Activated CD4-positive, alpha-beta memory T cell treated with anti-CD3 and anti-CD28 coated beads for 36 hours (primary cell): ENCODE measurements at regions of chr10 and their contacts with region 1.

Region 1: GRCh38 chr10:122374237-122374869 is at the start of gene PLEKHA1:
- DNase-seq: peak; percentile 95
- H3K4me3 Mint-ChIP-seq: peak within 1 kb of the TSS; percentile 89
- H3K27ac Mint-ChIP-seq: peak within 1 kb of the TSS; percentile 94
- H3K4me1 Mint-ChIP-seq: peaks cover 36% of the 10 kb centered on the region
- H3K27me3 Mint-ChIP-seq: peaks cover 15% of the 10 kb centered on the region
- total RNA-seq, gene PLEKHA1: 11.1 to 12.9 TPM

Region 2: GRCh38 chr10:121580276-121581116 is 793.9 kb before region 1 on chr10:
- CTCF ChIA-PET with region 1: no interaction called
- POLR2A ChIA-PET with region 1: no interaction called
- intact Hi-C with region 1: no loop called
- DNase-seq: no peak
- H3K4me3 Mint-ChIP-seq: no peak overlapping the region
- H3K27ac Mint-ChIP-seq: no peak overlapping the region
- H3K4me1 Mint-ChIP-seq: no peaks in the 10 kb centered on the region
- H3K27me3 Mint-ChIP-seq: no peaks in the 10 kb centered on the region

Region 3: DNA sequence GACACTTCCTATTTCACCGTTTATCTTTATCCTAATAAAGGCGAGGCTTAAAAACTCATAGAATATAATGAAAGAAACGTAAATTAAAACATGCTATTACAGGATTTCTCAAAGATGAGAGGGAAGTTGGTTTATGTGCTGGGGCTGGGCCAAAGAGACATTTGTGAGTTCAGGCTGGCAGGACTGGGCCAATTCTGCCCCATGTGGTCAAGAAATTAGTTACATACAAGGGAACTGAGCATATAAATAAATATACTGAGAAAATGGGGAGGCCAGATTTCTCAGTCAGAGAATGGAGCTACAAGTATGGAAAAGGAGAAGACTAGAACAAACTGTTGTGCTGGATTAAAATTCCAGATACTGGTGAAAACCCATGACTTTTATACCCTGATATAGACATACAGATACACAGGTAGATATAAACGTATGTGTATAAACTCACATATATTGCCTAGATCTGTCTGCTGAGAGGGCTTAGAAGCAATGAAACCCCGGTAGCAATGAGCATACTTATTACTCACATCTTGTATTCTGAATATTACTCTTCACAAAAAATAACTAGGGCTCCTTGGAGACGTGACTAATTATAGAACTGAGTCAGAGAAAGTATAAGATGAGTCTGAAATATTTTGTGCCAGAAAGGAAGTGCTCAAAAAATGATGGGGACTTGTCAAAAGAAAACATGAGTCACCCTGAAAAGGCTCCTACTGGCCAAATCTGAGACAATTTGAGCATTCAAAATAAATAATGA is 620.5 kb before region 1 on chr10:
- CTCF ChIA-PET with region 1: no interaction called
- POLR2A ChIA-PET with region 1: no interaction called
- intact Hi-C with region 1: loop called (anchors 10 kb)
- DNase-seq: no peak
- H3K4me3 Mint-ChIP-seq: no peak overlapping the region
- H3K27ac Mint-ChIP-seq: peak overlapping the region; percentile 68
- H3K4me1 Mint-ChIP-seq: peaks cover 23% of the 10 kb centered on the region
- H3K27me3 Mint-ChIP-seq: no peaks in the 10 kb centered on the region

Region 4: GRCh38 chr10:122142641-122143237 is 231.6 kb before region 1 on chr10:
- CTCF ChIA-PET with region 1: no interaction called
- POLR2A ChIA-PET with region 1: no interaction called
- intact Hi-C with region 1: no loop called
- DNase-seq: peak; percentile 35
- H3K4me3 Mint-ChIP-seq: no peak overlapping the region
- H3K27ac Mint-ChIP-seq: no peak overlapping the region
- H3K4me1 Mint-ChIP-seq: no peaks in the 10 kb centered on the region
- H3K27me3 Mint-ChIP-seq: peaks cover 2% of the 10 kb centered on the region

Region 5: DNA sequence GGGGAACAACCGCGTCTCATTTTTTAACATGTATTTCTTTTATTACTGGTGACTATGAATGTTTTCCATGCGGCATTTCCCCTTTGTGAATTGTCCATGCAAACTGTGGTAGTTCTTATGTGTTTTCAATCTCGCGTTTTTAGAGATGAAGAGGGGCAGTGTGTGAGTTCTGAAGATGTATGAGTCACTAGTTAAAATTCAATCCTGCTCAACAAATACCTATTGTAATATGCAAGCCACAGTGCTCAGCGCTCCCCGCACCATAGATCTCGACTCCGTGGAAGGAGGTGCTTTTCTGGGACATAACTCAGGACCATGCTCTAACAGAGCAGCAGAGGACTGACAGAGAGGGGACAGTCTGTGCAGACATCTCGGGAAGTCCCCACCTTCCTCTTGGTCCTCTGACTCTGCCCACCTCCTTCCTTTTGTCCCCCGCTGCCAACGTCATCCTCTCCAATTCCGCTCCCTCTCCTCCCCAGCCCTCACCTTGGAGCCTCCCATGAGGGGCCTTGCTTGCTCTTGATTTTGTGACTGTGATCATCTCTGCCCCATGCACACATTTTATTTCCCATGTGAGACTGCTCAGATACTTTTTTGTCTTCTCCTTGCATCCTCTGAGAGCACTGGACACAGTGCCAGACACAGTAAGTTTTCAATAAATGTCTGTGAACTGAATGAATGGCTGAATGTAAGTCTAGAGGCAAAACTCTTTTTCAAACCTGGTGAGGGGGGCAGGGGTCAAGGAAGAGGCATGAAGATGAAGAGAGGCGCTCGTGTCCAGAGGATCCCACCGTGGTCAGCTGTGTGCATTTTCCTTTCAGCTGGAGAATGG is 42.5 kb before region 1 on chr10:
- CTCF ChIA-PET with region 1: no interaction called
- POLR2A ChIA-PET with region 1: no interaction called
- intact Hi-C with region 1: loop called (anchors 5 kb)
- DNase-seq: no peak
- H3K4me3 Mint-ChIP-seq: no peak overlapping the region
- H3K27ac Mint-ChIP-seq: no peak overlapping the region
- H3K4me1 Mint-ChIP-seq: peaks cover 6% of the 10 kb centered on the region
- H3K27me3 Mint-ChIP-seq: peaks cover 31% of the 10 kb centered on the region

Region 6: DNA sequence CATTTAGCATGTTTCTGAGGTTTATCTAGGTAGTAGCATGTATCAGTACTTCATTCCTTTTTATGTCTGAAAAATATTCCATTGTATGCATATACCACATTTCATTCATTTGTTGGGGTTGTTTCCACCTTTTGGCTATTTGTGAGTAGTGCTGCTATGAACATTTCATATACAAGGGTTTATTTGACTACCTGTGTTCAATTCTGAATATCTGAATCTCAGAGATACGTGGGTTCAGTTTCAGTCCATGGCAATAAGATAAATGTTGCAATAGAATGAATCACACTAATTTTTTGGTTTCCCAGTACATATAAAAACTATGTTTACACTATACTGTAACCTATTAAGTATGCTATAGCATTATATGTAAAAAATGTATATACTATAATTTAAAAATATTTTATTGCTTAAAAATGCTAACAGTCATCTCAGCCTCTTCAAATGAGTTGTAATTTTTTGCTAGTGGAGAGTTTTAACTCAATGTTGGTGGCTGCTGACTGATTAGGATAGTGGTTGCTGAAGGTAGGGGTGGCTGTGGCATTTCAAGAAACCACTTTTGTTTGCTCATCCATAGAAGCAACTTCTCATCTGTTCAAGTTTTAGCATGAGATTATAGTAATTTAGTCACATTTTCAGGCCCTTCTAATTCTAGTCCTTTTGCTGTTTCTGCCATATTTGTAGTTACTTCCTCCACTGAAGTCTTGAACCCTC is 14.1 kb after region 1 on chr10:
- CTCF ChIA-PET with region 1: interaction called, 7 read pairs
- POLR2A ChIA-PET with region 1: interaction called, 8 read pairs
- intact Hi-C with region 1: loop called (anchors 1 kb)
- DNase-seq: peak; percentile 74
- H3K4me3 Mint-ChIP-seq: no peak overlapping the region
- H3K27ac Mint-ChIP-seq: peak overlapping the region; percentile 60
- H3K4me1 Mint-ChIP-seq: peaks cover 60% of the 10 kb centered on the region
- H3K27me3 Mint-ChIP-seq: no peaks in the 10 kb centered on the region

Region 7: DNA sequence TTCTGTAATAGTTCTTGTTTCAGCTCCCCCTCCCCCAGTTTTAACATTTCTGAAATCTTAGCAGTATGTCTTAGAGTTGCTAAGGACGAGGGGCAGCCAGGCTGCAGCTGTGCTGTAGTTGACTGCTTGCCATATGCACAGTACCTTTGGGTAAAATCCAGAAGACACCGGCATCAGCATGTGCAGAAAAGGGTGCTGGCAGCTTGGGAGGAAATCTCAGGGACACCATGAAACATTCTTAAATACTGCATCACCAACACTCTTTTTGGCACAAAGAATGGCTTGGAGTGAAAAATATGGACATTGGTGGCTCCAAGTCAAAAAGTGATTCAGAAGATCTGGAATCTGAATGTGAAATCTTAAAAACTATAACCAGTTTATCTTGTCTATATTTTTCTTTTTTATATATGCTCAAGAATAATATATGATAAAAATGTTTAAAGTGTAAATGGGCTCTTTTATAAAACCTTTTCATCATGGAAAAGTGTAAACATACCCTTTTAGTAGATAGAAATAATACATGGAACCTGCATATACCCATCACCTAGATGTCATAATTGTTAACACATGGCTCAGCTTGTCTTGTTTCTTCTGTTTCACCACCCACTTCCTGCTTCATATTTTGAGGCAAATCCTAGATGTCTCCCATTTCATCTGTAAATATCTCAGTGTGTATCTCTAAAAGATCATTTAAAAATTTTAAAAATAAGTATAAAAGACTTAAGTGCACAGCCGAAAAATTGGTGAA is 45.7 kb after region 1 on chr10:
- CTCF ChIA-PET with region 1: interaction called, 3 read pairs
- POLR2A ChIA-PET with region 1: interaction called, 6 read pairs
- intact Hi-C with region 1: loop called (anchors 2 kb)
- DNase-seq: no peak
- H3K4me3 Mint-ChIP-seq: no peak overlapping the region
- H3K27ac Mint-ChIP-seq: no peak overlapping the region
- H3K4me1 Mint-ChIP-seq: peaks cover 68% of the 10 kb centered on the region
- H3K27me3 Mint-ChIP-seq: no peaks in the 10 kb centered on the region

Region 8: DNA sequence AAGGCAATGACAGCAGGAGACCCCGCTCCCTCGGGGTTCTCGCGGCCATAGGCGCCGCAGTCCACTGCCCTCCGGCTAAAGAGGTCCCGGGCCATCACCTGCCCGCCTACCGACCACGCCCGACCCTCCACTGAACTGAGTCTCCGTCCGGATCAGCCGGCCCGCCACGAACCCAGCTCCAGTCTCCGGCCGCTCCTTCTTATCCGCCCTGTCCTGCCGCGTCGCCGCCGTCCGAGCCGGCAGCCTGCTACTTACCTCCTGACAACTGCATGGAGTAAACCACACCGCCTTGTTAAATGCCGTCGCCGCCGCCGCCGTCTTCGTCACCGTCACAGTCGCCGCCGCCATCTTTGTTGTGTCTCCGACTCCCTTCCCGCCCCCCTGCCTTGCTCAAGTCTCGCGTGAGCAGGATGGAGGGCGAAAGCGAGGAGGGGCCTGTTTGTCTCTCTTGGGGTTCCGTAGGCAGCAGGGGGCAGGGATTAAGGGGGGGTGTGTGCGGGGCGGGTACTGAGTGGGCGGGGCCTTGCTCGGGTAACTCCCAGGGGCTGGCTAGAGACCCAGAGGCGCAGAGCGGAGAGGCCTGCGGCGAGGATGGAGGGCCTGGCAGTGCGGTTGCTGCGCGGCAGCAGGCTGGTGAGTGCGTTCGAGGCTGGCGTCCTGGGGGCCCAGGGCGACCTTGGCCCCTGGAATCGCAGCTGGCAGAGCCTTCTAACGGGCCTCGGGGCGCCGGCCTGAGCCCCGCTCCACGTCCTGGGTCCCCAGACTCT is 634.3 kb after region 1 on chr10 and contains the starts of genes ACADSB and IKZF5:
- CTCF ChIA-PET with region 1: no interaction called
- POLR2A ChIA-PET with region 1: no interaction called
- intact Hi-C with region 1: loop called (anchors 10 kb)
- DNase-seq: peak; percentile 98
- H3K4me3 Mint-ChIP-seq: peak within 1 kb of the TSS; percentile 99
- H3K27ac Mint-ChIP-seq: peak within 1 kb of the TSS; percentile 96
- H3K4me1 Mint-ChIP-seq: peaks cover 47% of the 10 kb centered on the region
- H3K27me3 Mint-ChIP-seq: no peaks in the 10 kb centered on the region
- total RNA-seq, gene ACADSB: 22.1 to 25.1 TPM
- total RNA-seq, gene IKZF5: 14.5 to 14.8 TPM